Psoas muscle (tissue), 8 donors: ENCODE measurements at regions of chr7 and their contacts with region 1.

Region 1: DNA sequence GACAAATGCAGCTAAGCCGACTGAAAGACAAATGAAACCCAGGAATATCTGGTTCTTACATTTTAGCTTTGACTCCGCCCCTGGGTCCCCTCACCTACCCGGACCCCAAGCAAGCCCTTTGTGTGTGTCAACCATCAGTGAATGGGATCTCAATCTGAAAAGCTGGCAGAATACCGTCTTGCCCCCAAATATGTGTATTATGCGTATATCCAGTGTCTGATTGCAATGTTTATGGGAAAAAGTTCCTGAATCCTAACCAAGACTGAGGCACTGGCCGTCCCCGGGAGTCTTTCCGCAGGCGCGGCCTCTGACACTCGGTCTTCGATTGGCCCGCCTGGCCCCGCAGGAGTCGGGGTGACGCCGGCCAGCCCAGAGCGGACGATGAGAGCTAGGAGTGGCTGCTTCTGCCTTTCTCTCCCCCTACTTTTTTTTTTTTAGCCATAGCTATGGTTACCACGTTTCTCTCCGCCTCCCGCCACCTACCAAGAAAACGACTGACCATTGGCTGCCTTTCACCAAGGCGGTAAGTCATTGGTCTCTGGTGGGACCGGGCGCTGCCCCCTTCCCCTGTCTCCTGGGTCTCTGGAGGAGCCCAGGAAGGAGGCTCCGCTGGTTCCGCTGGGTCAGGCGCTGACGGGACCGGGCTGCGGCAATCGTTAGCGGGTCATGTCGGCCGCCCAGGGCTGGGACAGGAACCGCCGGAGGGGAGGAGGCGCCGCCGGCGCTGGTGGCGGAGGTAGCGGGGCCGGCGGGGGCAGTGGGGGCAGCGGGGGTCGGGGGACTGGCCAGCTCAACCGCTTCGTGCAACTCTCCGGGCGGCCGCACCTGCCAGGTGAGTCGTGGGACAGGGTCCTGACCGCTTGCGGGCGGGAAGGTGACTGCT is at the start of gene KLHDC10:
- DNase-seq: peak; percentile 96 to 98
- ATAC-seq: peak; percentile 97 to 98 (median 97)
- H3K4me3 ChIP-seq: peak within 1 kb of the TSS; percentile 94
- H3K27ac ChIP-seq: peak within 1 kb of the TSS; percentile 78
- H3K4me1 ChIP-seq: peaks cover 32% of the 10 kb centered on the region
- H3K27me3 ChIP-seq: no peaks in the 10 kb centered on the region
- CTCF ChIP-seq: no peak
- total RNA-seq, gene KLHDC10: 30.5 to 45.0 (median 36.5) TPM

Region 2: DNA sequence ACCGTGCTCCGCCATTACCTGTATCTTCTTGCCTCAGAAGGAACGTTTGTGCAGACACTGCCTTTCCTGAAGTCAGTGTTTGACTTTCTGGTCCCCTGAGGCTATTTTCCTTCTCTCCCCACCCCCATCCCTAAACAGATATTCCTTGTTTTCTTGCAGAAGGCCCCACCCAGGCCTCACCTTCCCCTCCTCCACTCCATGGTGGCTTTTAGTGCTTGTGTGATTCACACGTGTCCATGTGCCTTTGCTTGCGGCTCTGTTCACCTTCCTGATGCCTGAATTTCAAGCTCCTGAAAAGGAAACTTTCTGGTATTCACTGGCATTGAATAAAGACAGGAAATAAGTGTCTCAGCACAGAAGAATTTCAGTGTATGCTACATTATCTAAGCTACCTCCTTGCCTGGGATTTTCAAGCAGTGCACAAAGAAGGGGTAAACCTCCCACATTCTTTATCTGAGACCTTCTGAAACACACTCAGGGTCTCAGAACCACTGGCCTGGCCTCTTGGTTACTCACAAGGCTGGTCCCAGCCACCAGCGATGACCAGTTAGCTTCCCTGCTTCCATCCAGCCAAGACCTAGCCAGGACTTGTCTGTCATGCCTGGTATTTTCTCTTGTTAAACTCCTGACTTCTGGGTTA is 100.3 kb before region 1 on chr7:
- intact Hi-C with region 1: no loop called
- DNase-seq: no peak
- ATAC-seq: peak in 1 of 4 donors; percentile 26
- H3K4me3 ChIP-seq: no peak overlapping the region
- H3K27ac ChIP-seq: no peak overlapping the region
- H3K4me1 ChIP-seq: no peaks in the 10 kb centered on the region
- H3K27me3 ChIP-seq: no peaks in the 10 kb centered on the region
- CTCF ChIP-seq: no peak

Region 3: GRCh38 chr7:130127821-130128317 is 57.6 kb after region 1 on chr7:
- intact Hi-C with region 1: loop called in 1 of 2 experiments (anchors 10 kb)
- DNase-seq: no peak
- ATAC-seq: no peak
- H3K4me3 ChIP-seq: no peak overlapping the region
- H3K27ac ChIP-seq: no peak overlapping the region
- H3K4me1 ChIP-seq: peaks cover 6% of the 10 kb centered on the region
- H3K27me3 ChIP-seq: no peaks in the 10 kb centered on the region
- CTCF ChIP-seq: no peak

Region 4: DNA sequence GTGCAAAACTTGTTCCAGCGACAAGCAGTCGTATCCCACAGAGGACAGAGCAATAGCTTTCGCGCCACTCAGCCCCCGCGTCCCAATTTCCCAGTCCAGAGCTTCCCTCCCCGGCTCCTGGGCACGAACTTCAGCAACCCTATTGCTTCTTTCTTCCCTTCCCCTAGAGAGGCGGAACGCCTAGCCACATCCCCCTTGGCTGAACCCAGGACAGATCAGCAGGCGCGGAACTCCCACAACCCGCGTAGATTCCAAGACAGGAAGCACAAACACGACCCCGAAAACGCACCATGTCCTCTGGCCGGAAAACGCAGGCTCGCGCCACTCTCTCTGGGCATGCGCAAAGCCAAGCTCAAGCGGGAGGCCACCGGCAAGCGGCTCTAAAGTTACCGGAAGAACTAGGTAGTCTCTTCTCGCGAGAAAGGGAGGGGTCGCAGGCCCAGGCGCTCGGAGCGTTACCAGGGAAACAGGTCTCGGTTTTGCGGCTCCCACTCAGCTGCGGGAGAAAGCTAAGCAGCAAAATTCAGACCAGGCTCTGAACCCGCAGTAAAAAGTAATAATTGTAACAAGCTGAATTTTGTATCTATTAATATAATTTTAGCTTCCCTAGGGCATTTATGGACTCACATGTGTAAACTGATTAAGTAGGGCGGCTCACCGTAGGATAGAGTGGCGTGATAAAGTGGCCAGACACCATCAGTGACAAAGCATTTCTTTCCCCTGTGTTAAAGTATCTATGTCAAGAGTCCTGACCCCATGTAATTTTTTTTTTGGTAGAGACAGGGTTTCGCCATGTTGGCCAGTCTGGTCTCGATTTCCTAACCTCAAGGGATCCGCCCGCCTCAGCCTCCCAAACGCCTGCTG is 135.1 kb after region 1 on chr7 and contains the start of gene TMEM209:
- intact Hi-C with region 1: loop called (anchors 5 to 10 kb)
- DNase-seq: peak; percentile 94 to 98
- ATAC-seq: peak; percentile 98 to 100 (median 98)
- H3K4me3 ChIP-seq: peak within 1 kb of the TSS; percentile 83
- H3K27ac ChIP-seq: peak within 1 kb of the TSS; percentile 88
- H3K4me1 ChIP-seq: no peaks in the 10 kb centered on the region
- H3K27me3 ChIP-seq: no peaks in the 10 kb centered on the region
- CTCF ChIP-seq: no peak
- total RNA-seq, gene TMEM209: 7.0 to 11.3 (median 8.8) TPM

Region 5: DNA sequence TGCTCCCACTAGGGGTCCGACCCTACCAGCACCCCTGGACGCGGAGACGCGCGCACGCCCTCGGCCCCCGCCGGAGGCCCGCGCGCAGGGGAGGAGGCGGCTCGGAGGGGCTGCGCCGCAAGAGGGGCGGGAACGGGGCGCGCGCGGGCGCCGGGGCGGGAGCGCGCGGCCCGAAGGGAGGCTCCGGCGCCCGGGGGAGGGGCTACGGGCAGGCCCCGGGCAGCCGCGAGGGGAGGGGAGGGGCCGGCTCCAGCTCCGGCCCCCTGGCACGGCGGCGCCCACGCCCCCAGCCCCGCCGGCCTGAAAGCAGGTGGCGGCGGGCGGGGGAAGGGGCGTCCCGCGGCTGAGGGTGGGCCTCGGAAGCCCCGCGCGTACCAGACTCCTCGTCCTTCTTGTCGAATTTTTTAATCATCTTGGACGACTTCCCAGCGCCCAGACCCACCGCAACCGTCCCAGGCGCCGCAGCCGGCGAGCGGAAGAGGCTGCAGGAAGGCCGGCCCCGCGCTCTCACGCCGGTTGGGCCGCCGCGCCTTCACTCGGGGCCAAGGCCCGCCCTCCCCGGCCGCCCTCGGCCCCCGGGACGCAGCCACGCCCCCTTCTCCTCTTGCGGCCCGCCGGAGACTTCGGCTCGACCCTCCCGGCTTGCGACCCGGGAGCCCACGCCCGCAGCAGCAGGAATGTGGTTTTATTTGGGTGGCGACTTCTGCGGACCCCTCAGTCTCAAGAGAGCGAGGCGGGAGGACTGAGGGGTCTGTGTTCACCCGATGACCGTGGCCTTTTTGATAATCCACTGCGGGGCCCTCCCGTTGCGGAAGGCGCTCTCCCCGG is 598.3 kb after region 1 on chr7 and contains the start of gene COPG2:
- intact Hi-C with region 1: loop called in 1 of 2 experiments (anchors 5 kb)
- DNase-seq: peak; percentile 89 to 92
- ATAC-seq: peak; percentile 99 to 100 (median 99)
- H3K4me3 ChIP-seq: peak within 1 kb of the TSS; percentile 94
- H3K27ac ChIP-seq: peak within 1 kb of the TSS; percentile 91
- H3K4me1 ChIP-seq: peaks cover 6% of the 10 kb centered on the region
- H3K27me3 ChIP-seq: no peaks in the 10 kb centered on the region
- CTCF ChIP-seq: no peak
- total RNA-seq, gene COPG2: 13.2 to 21.5 (median 18.3) TPM

Region 6: DNA sequence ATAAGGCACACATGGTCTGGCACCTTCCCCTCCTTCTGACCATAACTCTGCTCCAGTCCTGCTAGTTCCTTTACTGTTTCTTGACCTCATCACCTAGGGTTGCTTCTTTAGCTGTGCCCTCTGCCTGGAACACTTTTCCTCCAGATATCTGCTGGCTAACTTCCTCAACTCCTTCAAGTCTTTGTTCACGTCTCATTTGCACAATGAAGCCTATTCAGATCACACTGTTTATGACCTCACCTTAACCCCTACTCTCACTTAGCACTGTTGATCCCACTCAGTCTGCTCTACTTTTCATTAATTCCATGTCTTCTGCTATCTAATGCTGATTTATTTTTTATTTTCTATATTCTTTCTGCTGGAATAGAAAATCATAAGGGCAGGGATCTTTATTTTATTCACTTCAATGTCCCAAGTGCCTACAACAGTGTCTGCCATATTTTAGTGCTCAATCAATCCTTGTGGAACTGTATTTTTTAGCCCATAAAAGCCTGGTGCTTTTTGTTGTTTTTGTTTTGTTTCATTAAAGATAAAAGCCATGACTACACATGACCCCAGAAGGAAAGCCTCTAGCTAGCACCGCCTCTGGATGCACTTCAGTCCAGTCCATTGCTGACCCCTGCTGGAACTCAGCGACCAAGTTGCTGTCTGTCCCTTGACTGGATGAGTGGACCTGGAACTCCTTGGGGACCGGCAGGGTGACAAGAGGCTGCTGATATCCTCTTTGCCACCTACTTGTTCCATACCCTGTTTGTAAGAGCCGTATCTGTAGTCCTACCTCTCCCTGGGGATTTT is 651.5 kb after region 1 on chr7:
- intact Hi-C with region 1: loop called in 1 of 2 experiments (anchors 5 kb)
- DNase-seq: peak; percentile 50 to 79
- ATAC-seq: peak; percentile 75 to 91 (median 85)
- H3K4me3 ChIP-seq: no peak overlapping the region
- H3K27ac ChIP-seq: no peak overlapping the region
- H3K4me1 ChIP-seq: no peaks in the 10 kb centered on the region
- H3K27me3 ChIP-seq: peaks cover 0 to 6% (median 0%) of the 10 kb centered on the region in 3 donors
- CTCF ChIP-seq: peak; percentile 63

Region 7: DNA sequence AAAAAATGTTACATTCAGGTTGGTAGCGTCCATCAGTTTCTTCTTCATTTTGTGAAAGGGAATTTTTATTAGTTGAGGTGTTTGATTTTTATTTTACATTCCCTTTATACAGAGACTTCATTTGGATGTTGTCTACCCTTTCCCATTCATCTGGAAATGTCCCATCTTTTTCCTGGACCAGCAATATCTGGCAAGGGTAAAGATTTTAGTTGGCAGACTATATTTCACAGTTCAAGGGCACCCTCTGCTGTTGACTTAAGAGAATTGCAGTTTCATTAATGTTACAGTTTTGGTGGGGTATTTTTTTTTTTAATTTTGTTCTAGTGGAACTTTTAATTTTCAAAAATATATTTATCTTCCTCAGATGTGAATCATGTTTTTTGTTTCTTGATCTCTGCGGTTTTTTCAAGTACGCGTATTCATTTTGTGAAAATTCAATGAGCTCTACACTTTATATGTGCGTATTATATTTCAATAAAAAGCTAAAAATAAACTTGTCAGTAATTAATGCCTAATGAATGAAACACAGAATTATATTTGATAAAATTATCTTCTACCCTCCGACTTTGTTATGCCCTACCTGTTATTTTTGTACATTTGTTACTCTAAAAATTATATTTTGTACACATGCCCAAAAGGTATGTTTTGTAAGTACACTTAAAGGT is 761.7 kb after region 1 on chr7:
- intact Hi-C with region 1: loop called (anchors 5 to 10 kb)
- DNase-seq: no peak
- ATAC-seq: peak in 2 of 4 donors; percentile 74 to 83
- H3K4me3 ChIP-seq: no peak overlapping the region
- H3K27ac ChIP-seq: no peak overlapping the region
- H3K4me1 ChIP-seq: no peaks in the 10 kb centered on the region
- H3K27me3 ChIP-seq: no peaks in the 10 kb centered on the region
- CTCF ChIP-seq: peak; percentile 81